ENCODE measurements at regions of chr3 and their contacts with region 1.

Region 1: DNA sequence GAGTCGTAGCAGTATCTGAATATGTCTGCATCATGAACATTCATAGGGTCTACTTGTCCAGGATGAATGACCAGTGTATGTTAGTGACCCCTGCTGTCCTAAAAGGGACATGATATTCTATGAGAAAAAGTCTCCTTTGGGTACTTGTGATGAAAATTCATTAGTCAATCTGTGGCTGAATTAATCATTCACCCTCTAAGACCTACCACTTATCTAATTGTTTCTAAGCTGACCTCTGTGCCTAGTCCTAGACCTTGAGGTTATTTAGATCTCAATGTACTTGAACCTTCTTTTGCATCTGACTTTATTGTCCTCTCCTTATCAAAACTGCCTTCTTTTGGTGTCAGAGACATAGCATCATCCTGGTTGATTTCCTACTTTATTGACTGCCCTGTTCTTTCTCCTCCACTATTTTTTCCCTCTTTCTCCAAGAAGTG is 799.3 kb downstream of the DIPK2A start:
- DNase-seq: peak; percentile 93
- H3K4me3 ChIP-seq: no peak overlapping the region
- H3K27ac ChIP-seq: peak overlapping the region; percentile 88
- H3K4me1 ChIP-seq: peaks cover 43% of the 10 kb centered on the region
- H3K27me3 ChIP-seq: no peaks in the 10 kb centered on the region
- CTCF ChIP-seq: peak; percentile 28 to 50
- POLR2A ChIP-seq: peak; percentile 39

Region 2: GRCh38 chr3:143775459-143775858 is 995.5 kb before region 1 on chr3:
- CTCF ChIA-PET with region 1: interaction called, 8 read pairs
- POLR2A ChIA-PET with region 1: no interaction called
- dilution Hi-C with region 1: no loop called
- intact Hi-C with region 1: loop called (anchors 1 kb)
- DNase-seq: peak; percentile 57
- H3K4me3 ChIP-seq: no peak overlapping the region
- H3K27ac ChIP-seq: no peak overlapping the region
- H3K4me1 ChIP-seq: peaks cover 3% of the 10 kb centered on the region
- H3K27me3 ChIP-seq: no peaks in the 10 kb centered on the region
- CTCF ChIP-seq: peak; percentile 32 to 37
- POLR2A ChIP-seq: no peak

Region 3: GRCh38 chr3:144499001-144499745 is 271.8 kb before region 1 on chr3:
- CTCF ChIA-PET with region 1: interaction called, 8 read pairs
- POLR2A ChIA-PET with region 1: no interaction called
- dilution Hi-C with region 1: no loop called
- intact Hi-C with region 1: loop called (anchors 2 kb)
- DNase-seq: peak; percentile 72
- H3K4me3 ChIP-seq: no peak overlapping the region
- H3K27ac ChIP-seq: peak overlapping the region; percentile 35
- H3K4me1 ChIP-seq: peaks cover 13% of the 10 kb centered on the region
- H3K27me3 ChIP-seq: no peaks in the 10 kb centered on the region
- CTCF ChIP-seq: no peak
- POLR2A ChIP-seq: no peak

Region 4: GRCh38 chr3:144831955-144832716 is 61.2 kb after region 1 on chr3:
- CTCF ChIA-PET with region 1: no interaction called
- POLR2A ChIA-PET with region 1: no interaction called
- dilution Hi-C with region 1: no loop called
- intact Hi-C with region 1: loop called (anchors 2 kb)
- DNase-seq: peak; percentile 90
- H3K4me3 ChIP-seq: no peak overlapping the region
- H3K27ac ChIP-seq: peak overlapping the region; percentile 28
- H3K4me1 ChIP-seq: peaks cover 18% of the 10 kb centered on the region
- H3K27me3 ChIP-seq: no peaks in the 10 kb centered on the region
- CTCF ChIP-seq: no peak
- POLR2A ChIP-seq: no peak

Region 5: GRCh38 chr3:145760036-145760435 is 989.1 kb after region 1 on chr3:
- CTCF ChIA-PET with region 1: no interaction called
- POLR2A ChIA-PET with region 1: no interaction called
- dilution Hi-C with region 1: no loop called
- intact Hi-C with region 1: loop called (anchors 2 kb)
- DNase-seq: peak; percentile 58
- H3K4me3 ChIP-seq: no peak overlapping the region
- H3K27ac ChIP-seq: no peak overlapping the region
- H3K4me1 ChIP-seq: peaks cover 2% of the 10 kb centered on the region
- H3K27me3 ChIP-seq: no peaks in the 10 kb centered on the region
- CTCF ChIP-seq: no peak
- POLR2A ChIP-seq: no peak